Common myeloid progenitor, CD34-positive (primary cell): ENCODE measurements at regions of chr12 and their contacts with region 1.

Region 1: GRCh38 chr12:49866859-49867579 is 24.1 kb upstream of the BCDIN3D start:
- DNase-seq: peak; percentile 46 to 72 (median 67)
- H3K4me3 ChIP-seq: no peak overlapping the region
- H3K27ac ChIP-seq: no peak overlapping the region
- H3K4me1 ChIP-seq: peaks cover 0 to 32% (median 19%) of the 10 kb centered on the region in 4 experiments
- H3K27me3 ChIP-seq: peaks cover 0 to 12% (median 4%) of the 10 kb centered on the region in 5 experiments

Region 2: DNA sequence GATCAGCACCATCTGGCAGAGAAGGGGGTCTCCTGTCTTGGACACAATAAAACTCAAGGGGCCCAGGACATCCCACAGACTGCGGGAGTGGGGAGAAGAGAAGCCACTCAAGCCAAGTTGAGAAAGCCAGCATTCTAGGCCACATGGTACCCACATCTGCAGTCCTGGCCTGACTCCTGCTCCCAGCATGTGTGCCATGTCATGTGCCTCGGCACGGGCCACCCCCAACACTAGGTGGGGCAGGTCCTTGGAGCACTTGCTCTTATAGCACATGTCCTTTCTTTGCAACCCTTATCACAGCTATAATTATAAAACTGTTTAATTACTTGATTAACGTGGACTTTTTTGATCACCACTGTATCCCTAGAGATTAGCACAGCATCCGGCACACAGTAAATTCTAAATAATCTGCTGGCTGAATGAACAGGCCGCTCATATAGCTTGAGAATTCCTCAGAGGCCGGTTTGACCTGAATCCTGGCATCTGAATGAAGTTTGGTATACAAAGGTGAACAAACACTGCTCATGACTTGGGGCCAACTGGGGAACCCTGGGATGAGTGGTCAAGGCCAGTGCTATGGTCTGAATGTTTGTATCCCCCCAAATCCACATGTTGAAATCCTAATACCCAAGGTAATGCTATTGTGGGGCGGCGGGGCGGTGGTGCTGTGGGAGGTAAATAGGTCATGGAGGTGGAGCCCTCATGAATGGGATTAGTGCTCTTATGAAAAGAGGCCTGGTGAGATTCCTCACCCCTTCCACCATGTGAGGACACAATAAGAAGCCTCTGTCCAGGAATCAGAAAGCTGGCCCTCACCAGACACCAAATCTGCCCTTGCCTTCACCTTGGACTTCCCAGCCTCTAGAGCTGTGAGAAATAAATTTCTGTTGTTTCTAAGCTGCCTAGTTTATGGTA is 45.4 kb before region 1 on chr12:
- CTCF ChIA-PET with region 1: no interaction called
- POLR2A ChIA-PET with region 1: no interaction called
- DNase-seq: no peak
- H3K4me3 ChIP-seq: peak overlapping the region in 2 of 7 experiments; percentile 25 to 27
- H3K27ac ChIP-seq: no peak overlapping the region
- H3K4me1 ChIP-seq: peaks cover 3 to 49% (median 28%) of the 10 kb centered on the region in 4 experiments
- H3K27me3 ChIP-seq: no peaks in the 10 kb centered on the region

Region 3: GRCh38 chr12:49855005-49855404 is 12.0 kb before region 1 on chr12:
- CTCF ChIA-PET with region 1: interaction called, 21 read pairs
- POLR2A ChIA-PET with region 1: no interaction called
- DNase-seq: no peak
- H3K4me3 ChIP-seq: no peak overlapping the region
- H3K27ac ChIP-seq: no peak overlapping the region
- H3K4me1 ChIP-seq: no peaks in the 10 kb centered on the region
- H3K27me3 ChIP-seq: peaks cover 0 to 3% (median 0%) of the 10 kb centered on the region in 5 experiments

Region 4: GRCh38 chr12:49959570-49960465 is 92.8 kb after region 1 on chr12:
- CTCF ChIA-PET with region 1: interaction called, 56 read pairs
- POLR2A ChIA-PET with region 1: no interaction called
- DNase-seq: peak in 2 of 3 donors; percentile 88 to 90
- H3K4me3 ChIP-seq: no peak overlapping the region
- H3K27ac ChIP-seq: no peak overlapping the region
- H3K4me1 ChIP-seq: peaks cover 6 to 43% (median 34%) of the 10 kb centered on the region in 4 experiments
- H3K27me3 ChIP-seq: peaks cover 0 to 97% (median 60%) of the 10 kb centered on the region in 5 experiments